Activated naive CD4-positive, alpha-beta T cell treated with anti-CD3 and anti-CD28 coated beads for 36 hours (primary cell): ENCODE measurements at regions of chr13 and their contacts with region 1.

Region 1: GRCh38 chr13:46211483-46212351 is at the start of gene LRRC63:
- DNase-seq: peak; percentile 83
- H3K4me3 Mint-ChIP-seq: peak within 1 kb of the TSS; percentile 91
- H3K27ac Mint-ChIP-seq: peak within 1 kb of the TSS; percentile 91
- H3K4me1 Mint-ChIP-seq: peaks cover 14% of the 10 kb centered on the region
- H3K27me3 Mint-ChIP-seq: no peaks in the 10 kb centered on the region
- total RNA-seq, gene LRRC63: 0.24 to 0.32 TPM

Region 2: GRCh38 chr13:46052319-46053161 is 159.2 kb before region 1 on chr13 and contains the start of gene ZC3H13:
- CTCF ChIA-PET with region 1: no interaction called
- intact Hi-C with region 1: loop called (anchors 1 kb)
- DNase-seq: peak; percentile 97
- H3K4me3 Mint-ChIP-seq: peak within 1 kb of the TSS; percentile 81
- H3K27ac Mint-ChIP-seq: peak within 1 kb of the TSS; percentile 94
- H3K4me1 Mint-ChIP-seq: peaks cover 29% of the 10 kb centered on the region
- H3K27me3 Mint-ChIP-seq: peaks cover 4% of the 10 kb centered on the region
- total RNA-seq, gene ZC3H13: 38.2 to 42.2 TPM

Region 3: GRCh38 chr13:46288570-46289259 is 77.0 kb after region 1 on chr13:
- CTCF ChIA-PET with region 1: interaction called, 3 read pairs
- intact Hi-C with region 1: loop called (anchors 2 kb)
- DNase-seq: no peak
- H3K4me3 Mint-ChIP-seq: no peak overlapping the region
- H3K27ac Mint-ChIP-seq: no peak overlapping the region
- H3K4me1 Mint-ChIP-seq: peaks cover 17% of the 10 kb centered on the region
- H3K27me3 Mint-ChIP-seq: no peaks in the 10 kb centered on the region